ENCODE measurements at regions of chr3 and their contacts with region 1.

Region 1: GRCh38 chr3:40524568-40525285 is at the start of gene ZNF621:
- DNase-seq: peak; percentile 87
- H3K4me3 Mint-ChIP-seq: peak within 1 kb of the TSS; percentile 94
- H3K27ac Mint-ChIP-seq: peak within 1 kb of the TSS; percentile 84
- H3K4me1 Mint-ChIP-seq: peaks cover 32% of the 10 kb centered on the region
- H3K27me3 Mint-ChIP-seq: no peaks in the 10 kb centered on the region
- total RNA-seq, gene ZNF621: 24.9 to 25.7 TPM

Region 2: DNA sequence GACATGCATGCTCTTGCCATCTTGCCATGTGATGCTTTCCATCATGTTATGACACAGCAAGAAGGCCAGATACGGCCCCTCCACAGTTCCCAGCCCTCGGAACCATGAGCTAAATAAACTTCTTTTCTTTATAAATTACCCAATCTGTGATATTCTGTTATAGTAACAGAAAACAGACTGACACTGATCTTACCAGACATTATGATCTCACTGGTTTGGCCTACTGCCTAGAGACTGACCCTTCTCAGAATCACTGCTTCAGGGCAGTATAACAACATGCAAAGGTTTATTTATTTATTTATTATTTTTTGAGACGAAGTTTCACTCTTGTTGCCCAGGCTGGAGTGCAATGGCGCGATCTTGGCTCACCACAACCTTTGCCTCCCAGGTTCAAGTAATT is 33.8 kb before region 1 on chr3:
- CTCF ChIA-PET with region 1: no interaction called
- POLR2A ChIA-PET with region 1: no interaction called
- DNase-seq: no peak
- H3K4me3 Mint-ChIP-seq: no peak overlapping the region
- H3K27ac Mint-ChIP-seq: no peak overlapping the region
- H3K4me1 Mint-ChIP-seq: no peaks in the 10 kb centered on the region
- H3K27me3 Mint-ChIP-seq: no peaks in the 10 kb centered on the region

Region 3: DNA sequence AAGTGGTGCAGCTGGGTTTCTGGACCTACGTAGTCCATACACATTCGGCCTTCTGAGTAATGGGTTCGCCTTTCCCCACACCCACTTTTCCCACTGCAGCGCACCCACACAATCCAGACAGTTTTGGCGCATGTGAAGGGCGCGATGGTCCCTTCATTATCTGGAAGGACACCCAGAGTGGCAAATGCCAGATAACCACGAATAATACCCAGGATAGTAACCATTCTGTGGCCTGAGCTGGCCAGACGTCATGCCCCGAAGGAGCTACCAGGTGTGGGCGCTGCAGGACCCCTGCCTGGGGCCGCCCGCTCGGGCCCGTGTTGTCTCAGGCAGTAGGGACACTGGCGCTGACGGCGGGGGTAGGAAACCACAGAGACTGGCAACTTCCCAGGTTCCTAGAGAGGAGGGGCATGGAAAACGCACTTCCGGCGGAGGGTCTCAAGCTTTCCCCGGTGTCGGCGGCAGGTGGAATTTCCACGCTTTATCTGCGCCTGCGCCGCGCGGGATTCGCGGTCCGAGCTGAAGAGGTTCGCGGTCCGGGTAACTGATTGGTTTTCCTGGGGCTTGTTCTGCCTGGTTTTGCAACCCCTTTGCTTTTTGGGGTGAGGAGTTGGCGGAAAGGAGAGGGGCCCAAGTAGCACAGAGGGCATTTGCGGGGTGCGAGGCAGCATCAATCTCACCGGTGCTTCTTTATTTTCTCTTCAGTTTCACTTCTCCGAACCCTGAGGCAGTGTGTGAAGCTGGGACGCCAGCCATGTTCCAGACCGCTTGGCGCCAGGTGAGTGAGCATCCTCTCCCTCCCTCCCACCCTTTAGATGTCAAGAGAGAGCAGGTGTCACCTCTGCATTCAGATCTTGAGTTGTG is 18.9 kb before region 1 on chr3 and contains the start of gene ZNF620:
- CTCF ChIA-PET with region 1: interaction called, 24 read pairs
- POLR2A ChIA-PET with region 1: interaction called, 19 read pairs
- DNase-seq: peak; percentile 48
- H3K4me3 Mint-ChIP-seq: peak within 1 kb of the TSS; percentile 94
- H3K27ac Mint-ChIP-seq: peak within 1 kb of the TSS; percentile 69
- H3K4me1 Mint-ChIP-seq: peaks cover 34% of the 10 kb centered on the region
- H3K27me3 Mint-ChIP-seq: peaks cover 3% of the 10 kb centered on the region
- total RNA-seq, gene ZNF620: 6.1 to 6.3 TPM

Region 4: DNA sequence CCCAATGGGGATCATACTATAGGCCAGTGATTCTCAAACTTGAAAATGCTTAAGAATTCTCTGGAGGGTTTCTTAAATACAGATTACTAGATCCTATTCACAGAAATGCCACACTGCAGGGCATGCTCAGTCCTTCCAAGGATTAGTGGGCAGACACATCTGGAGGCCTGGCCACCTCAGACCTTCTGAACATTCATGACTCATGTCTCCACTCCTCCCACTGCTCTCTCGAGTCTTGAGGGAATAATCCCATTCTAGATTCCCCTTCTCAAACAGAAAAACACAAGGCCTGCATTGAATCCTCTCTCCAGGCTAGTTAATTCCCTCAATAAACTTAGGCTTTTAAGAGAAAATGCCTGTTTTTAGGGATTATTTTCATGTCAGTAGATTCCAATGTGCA is 22.1 kb after region 1 on chr3:
- CTCF ChIA-PET with region 1: no interaction called
- POLR2A ChIA-PET with region 1: no interaction called
- DNase-seq: no peak
- H3K4me3 Mint-ChIP-seq: no peak overlapping the region
- H3K27ac Mint-ChIP-seq: no peak overlapping the region
- H3K4me1 Mint-ChIP-seq: no peaks in the 10 kb centered on the region
- H3K27me3 Mint-ChIP-seq: no peaks in the 10 kb centered on the region